ENCODE measurements at regions of chr4 and their contacts with region 1.

Region 1: GRCh38 chr4:140851032-140851636 is 94.9 kb upstream of the TBC1D9 start:
- DNase-seq: no peak
- H3K4me3 Mint-ChIP-seq: no peak overlapping the region
- H3K27ac Mint-ChIP-seq: no peak overlapping the region
- H3K4me1 Mint-ChIP-seq: no peaks in the 10 kb centered on the region
- H3K27me3 Mint-ChIP-seq: peaks cover 14% of the 10 kb centered on the region

Region 2: GRCh38 chr4:140637836-140638235 is 213.3 kb before region 1 on chr4:
- intact Hi-C with region 1: loop called (anchors 10 kb)
- DNase-seq: peak; percentile 19
- H3K4me3 Mint-ChIP-seq: no peak overlapping the region
- H3K27ac Mint-ChIP-seq: no peak overlapping the region
- H3K4me1 Mint-ChIP-seq: no peaks in the 10 kb centered on the region
- H3K27me3 Mint-ChIP-seq: peaks cover 9% of the 10 kb centered on the region

Measured in activated T-helper 2 cell treated with anti-CD3 and anti-CD28 coated beads, Interferon-gamma antibody, Interleukin-2, Interleukin-4, amounts not matched to agents 10 μg/mL and 5 μg/mL and 100 μg/mL, durations not matched to agents 14 hours and 24 hours and 36 hours (primary cell).